Right cardiac atrium (tissue), 5 donors: ENCODE measurements at regions of chr16 and their contacts with region 1.

Region 1: DNA sequence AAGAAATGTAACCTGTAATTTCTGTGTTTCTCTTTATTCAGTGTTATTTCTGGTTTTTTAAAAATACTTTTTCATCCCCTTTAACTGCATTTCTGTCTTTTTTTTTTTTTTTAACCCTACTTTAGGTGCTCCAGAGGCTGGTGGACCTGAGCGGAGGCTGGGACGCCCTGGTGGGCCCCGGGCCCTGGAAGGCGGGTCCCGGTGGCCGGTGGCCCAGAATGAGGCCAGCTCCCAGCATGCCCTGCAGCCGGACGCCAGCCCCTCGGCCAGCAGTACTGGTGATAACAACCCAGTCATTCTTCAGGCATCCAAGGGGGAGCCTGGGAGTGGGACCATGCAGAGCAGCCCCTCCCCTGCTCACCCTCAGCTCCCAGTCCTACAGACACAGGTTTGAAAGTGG is 1.5 kb downstream of the SRCAP start:
- DNase-seq: peak; percentile 50 to 86 (median 82)
- ATAC-seq: no peak
- H3K4me3 ChIP-seq: no peak overlapping the region
- H3K27ac ChIP-seq: no peak overlapping the region
- H3K4me1 ChIP-seq: peaks cover 2% of the 10 kb centered on the region
- H3K27me3 ChIP-seq: no peaks in the 10 kb centered on the region

Region 2: GRCh38 chr16:30378236-30379204 is 322.0 kb before region 1 on chr16:
- intact Hi-C with region 1: no loop called
- DNase-seq: peak; percentile 99 to 100 (median 100)
- ATAC-seq: peak; percentile 97
- H3K4me3 ChIP-seq: peak overlapping the region; percentile 71
- H3K27ac ChIP-seq: peak overlapping the region; percentile 98
- H3K4me1 ChIP-seq: peaks cover 2% of the 10 kb centered on the region
- H3K27me3 ChIP-seq: no peaks in the 10 kb centered on the region

Region 3: DNA sequence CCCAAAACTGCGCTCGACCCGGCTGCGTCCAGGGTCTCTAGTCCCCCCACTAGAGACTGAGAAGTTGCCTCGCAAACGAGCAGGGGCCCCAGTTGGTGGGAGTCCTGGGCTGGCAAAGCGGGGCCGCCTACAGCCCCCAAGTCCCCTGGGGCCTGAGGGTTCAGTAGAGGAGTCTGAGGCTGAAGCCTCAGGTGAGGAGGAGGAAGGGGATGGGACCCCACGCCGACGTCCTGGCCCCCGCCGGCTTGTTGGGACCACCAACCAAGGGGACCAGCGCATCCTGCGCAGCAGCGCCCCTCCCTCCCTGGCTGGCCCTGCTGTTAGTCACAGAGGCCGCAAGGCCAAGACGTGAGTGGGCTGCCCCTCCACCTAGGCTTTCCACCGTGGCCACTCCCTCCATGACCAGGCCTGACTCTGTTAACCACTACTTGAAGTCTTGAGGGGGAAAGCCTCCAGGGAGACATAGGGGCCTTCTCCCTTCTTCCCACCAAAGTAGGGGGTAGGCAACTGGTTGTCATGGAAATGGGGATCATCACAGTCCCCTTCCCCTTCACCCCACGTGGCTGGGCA is 39.0 kb after region 1 on chr16:
- intact Hi-C with region 1: loop called in 1 of 4 experiments (anchors 5 kb)
- DNase-seq: peak in 1 of 3 donors; percentile 63
- ATAC-seq: peak in 1 of 2 donors; percentile 5
- H3K4me3 ChIP-seq: no peak overlapping the region
- H3K27ac ChIP-seq: no peak overlapping the region
- H3K4me1 ChIP-seq: peaks cover 6% of the 10 kb centered on the region
- H3K27me3 ChIP-seq: no peaks in the 10 kb centered on the region

Region 4: GRCh38 chr16:30761928-30762810 is 61.7 kb after region 1 on chr16 and contains the starts of genes CFAP119 and RNF40:
- intact Hi-C with region 1: loop called in 1 of 4 experiments (anchors 10 kb)
- DNase-seq: peak; percentile 96 to 98 (median 98)
- ATAC-seq: peak; percentile 96 to 97
- H3K4me3 ChIP-seq: peak within 1 kb of the TSS; percentile 91
- H3K27ac ChIP-seq: peak within 1 kb of the TSS; percentile 82
- H3K4me1 ChIP-seq: peaks cover 9% of the 10 kb centered on the region
- H3K27me3 ChIP-seq: no peaks in the 10 kb centered on the region
- total RNA-seq, gene CFAP119: 0.51 to 1.5 (median 0.92) TPM
- total RNA-seq, gene RNF40: 46.6 to 64.9 (median 49.8) TPM